AG04450 (cell line): ENCODE measurements at regions of chr9 and their contacts with region 1.

Region 1: GRCh38 chr9:73023025-73023541 is 70.2 kb upstream of the ALDH1A1 start:
- DNase-seq: peak; percentile 27
- H3K4me3 ChIP-seq: no peak overlapping the region
- H3K27ac ChIP-seq: no peak overlapping the region
- H3K27me3 ChIP-seq: no peaks in the 10 kb centered on the region
- CTCF ChIP-seq: peak; percentile 87

Region 2: GRCh38 chr9:72038890-72039410 is 984.1 kb before region 1 on chr9:
- CTCF ChIA-PET with region 1: interaction called, 14 read pairs
- POLR2A ChIA-PET with region 1: no interaction called
- DNase-seq: peak; percentile 61
- H3K4me3 ChIP-seq: no peak overlapping the region
- H3K27ac ChIP-seq: no peak overlapping the region
- H3K27me3 ChIP-seq: peaks cover 6% of the 10 kb centered on the region
- CTCF ChIP-seq: peak; percentile 96

Region 3: GRCh38 chr9:72703574-72703973 is 319.5 kb before region 1 on chr9:
- CTCF ChIA-PET with region 1: no interaction called
- POLR2A ChIA-PET with region 1: no interaction called
- DNase-seq: no peak
- H3K4me3 ChIP-seq: no peak overlapping the region
- H3K27ac ChIP-seq: no peak overlapping the region
- H3K27me3 ChIP-seq: no peaks in the 10 kb centered on the region
- CTCF ChIP-seq: no peak

Region 4: GRCh38 chr9:72871685-72872084 is 151.4 kb before region 1 on chr9:
- CTCF ChIA-PET with region 1: interaction called, 25 read pairs
- POLR2A ChIA-PET with region 1: no interaction called
- DNase-seq: no peak
- H3K4me3 ChIP-seq: no peak overlapping the region; the same call in 1 of the 2 replicates
- H3K27ac ChIP-seq: no peak overlapping the region
- H3K27me3 ChIP-seq: no peaks in the 10 kb centered on the region
- CTCF ChIP-seq: peak; percentile 38

Region 5: GRCh38 chr9:72983512-72984225 is 39.4 kb before region 1 on chr9:
- CTCF ChIA-PET with region 1: no interaction called
- POLR2A ChIA-PET with region 1: no interaction called
- DNase-seq: no peak
- H3K4me3 ChIP-seq: no peak overlapping the region
- H3K27ac ChIP-seq: no peak overlapping the region
- H3K27me3 ChIP-seq: no peaks in the 10 kb centered on the region
- CTCF ChIP-seq: no peak

Region 6: DNA sequence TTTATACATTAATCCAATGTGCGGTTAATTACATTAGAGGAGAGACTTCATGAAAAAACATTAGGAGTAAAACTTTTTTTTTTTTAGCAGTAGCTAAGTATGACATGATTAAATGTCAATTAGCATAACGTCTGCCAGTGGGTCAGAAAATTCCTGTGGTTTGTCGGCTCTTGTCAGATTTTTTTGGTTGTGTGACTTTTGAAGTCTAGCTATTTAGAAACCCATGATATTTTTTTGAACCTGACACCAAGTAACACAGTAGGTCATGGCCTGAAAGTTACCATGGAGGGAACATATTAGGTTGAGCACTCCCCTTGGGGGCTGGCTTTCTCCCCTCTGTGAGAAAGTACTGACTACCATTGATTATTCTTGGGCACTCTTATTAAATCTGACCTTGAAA is 14.5 kb after region 1 on chr9:
- CTCF ChIA-PET with region 1: interaction called, 12 read pairs
- POLR2A ChIA-PET with region 1: no interaction called
- DNase-seq: no peak
- H3K4me3 ChIP-seq: no peak overlapping the region
- H3K27ac ChIP-seq: no peak overlapping the region
- H3K27me3 ChIP-seq: no peaks in the 10 kb centered on the region
- CTCF ChIP-seq: no peak

Region 7: DNA sequence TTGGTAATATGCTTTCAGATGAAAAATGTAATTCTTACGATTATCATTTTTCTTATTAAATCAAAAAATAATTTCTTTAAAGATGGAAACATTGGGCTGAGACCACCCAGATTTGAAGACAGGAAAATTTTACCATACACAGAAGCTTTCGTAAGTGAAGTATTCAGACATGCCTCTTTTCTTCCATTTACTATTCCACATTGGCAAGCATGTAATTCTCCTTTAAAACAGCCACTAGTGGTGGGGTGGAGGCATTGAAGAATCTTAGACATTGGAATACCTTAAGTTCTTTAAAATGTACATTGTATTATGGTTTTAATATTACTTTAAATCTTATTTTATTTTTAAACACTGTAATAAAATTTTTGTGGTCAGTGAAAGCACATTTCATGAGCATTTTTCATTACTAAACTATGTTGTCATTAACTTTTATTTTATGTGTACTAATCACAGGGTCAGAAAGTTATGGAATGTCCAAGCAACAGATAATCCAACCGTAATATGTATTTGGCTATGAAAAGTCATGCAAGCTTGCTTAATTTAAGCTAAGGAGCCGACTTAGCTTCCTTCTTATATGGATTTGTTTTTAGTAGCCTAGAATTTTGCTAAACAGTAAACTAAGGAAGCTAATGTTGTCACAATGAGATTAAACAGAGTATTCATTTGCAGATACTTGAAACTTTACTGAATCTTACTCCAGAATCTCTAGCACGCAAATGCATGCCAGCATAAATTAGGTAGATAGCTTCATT is 27.2 kb after region 1 on chr9:
- CTCF ChIA-PET with region 1: interaction called, 10 read pairs
- POLR2A ChIA-PET with region 1: no interaction called
- DNase-seq: no peak
- H3K4me3 ChIP-seq: no peak overlapping the region
- H3K27ac ChIP-seq: no peak overlapping the region
- H3K27me3 ChIP-seq: no peaks in the 10 kb centered on the region
- CTCF ChIP-seq: no peak